Head of caudate nucleus (tissue), 42 donors: ENCODE measurements at regions of chr3 and their contacts with region 1.

Region 1: DNA sequence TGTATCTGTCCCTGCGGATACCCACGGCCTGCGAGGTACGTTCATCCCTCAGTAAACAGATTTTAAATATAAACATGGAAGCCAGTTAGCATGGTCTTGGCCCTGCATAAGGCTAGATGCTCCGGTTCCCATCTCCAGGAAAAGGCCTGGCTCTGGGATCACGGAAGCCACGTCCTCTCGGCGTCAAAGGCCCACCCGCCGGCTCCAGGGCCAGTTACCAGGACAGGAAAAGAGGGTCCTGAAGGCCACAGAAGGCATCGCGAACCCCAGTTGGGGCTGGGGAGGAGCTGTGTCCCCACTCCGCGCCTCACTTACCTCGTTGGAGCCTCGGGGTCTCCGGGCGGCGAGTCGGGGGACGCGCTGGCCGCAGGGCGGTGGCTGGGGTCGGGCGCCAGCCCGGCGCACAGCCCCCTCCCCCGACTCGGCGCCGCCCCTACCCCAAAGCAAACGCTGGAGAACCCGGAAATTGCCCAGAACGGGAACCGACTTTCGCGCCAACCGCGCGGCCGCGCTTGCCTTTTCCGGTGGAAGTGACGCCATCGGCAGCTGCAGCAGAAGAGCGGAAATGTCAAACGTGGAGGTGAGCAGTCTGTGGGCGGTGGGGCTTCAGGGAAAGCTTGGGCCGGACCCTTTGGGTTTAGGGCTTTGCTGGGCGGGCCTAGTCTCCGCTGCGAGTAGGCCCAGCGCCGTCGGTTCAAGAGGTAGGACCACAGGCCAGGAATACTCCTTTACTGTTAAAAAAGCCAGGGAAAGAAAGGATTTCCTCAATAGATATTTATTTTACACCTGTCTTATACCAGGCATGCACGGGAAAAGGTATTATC is at the start of gene TOPBP1:
- DNase-seq: peak; percentile 66 to 93 (median 87)

Region 2: DNA sequence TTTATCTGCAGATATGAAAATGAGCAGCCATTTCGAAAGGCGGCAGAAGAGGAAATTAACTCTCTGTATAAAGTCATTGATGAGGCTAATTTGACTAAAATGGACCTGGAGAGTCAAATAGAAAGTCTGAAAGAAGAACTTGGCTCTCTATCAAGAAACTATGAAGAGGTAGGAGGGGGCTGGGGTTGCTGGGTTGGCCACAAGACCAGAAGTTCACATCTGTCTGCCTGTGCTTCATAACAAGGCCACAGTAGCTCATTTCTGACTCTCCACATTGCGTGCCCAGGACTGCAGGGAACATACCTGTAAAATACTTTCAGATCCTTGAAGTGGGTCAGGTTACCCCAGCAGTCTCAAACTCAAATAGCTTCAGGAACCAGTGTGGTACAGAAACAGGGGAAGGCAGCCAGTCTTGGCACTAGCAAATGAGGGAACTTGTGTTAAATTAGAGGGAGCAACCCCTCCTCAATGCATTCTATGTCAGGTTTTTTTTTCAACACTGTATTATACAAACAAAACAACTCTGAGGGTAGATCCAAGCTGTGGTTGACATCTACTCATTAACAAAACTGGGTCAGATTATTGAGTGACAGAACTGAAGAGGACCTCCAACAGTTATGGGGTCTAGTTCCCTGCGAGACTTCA is 213.1 kb before region 1 on chr3:
- intact Hi-C with region 1: no loop called
- DNase-seq: peak in 1 of 42 donors; percentile 18

Region 3: DNA sequence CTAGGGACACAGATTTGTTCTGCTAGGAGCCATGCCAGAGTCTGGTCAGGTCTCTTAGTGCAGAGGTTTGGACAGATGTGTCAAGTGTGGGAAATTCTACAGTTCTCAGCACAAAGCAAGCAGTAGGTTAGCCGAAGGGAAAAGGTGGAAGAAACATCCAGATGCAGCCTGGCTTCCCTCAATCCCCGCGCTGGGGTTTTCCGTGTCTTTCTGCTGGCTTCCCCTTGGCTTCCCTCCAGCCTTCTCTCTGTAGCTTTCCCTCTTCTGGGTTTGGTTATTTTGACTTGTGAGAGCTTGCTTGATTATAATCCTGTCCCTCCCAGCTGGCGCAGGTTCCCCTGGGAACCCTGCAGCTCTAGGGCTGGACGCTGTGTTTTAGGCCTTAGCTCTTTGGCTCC is 88.6 kb after region 1 on chr3:
- intact Hi-C with region 1: loop called (anchors 10 kb)
- DNase-seq: peak in 2 of 42 donors; percentile 24 to 46

Region 4: GRCh38 chr3:133901083-133901482 is 239.4 kb after region 1 on chr3:
- intact Hi-C with region 1: no loop called
- DNase-seq: no peak